ENCODE measurements at regions of chr11 and their contacts with region 1.

Region 1: DNA sequence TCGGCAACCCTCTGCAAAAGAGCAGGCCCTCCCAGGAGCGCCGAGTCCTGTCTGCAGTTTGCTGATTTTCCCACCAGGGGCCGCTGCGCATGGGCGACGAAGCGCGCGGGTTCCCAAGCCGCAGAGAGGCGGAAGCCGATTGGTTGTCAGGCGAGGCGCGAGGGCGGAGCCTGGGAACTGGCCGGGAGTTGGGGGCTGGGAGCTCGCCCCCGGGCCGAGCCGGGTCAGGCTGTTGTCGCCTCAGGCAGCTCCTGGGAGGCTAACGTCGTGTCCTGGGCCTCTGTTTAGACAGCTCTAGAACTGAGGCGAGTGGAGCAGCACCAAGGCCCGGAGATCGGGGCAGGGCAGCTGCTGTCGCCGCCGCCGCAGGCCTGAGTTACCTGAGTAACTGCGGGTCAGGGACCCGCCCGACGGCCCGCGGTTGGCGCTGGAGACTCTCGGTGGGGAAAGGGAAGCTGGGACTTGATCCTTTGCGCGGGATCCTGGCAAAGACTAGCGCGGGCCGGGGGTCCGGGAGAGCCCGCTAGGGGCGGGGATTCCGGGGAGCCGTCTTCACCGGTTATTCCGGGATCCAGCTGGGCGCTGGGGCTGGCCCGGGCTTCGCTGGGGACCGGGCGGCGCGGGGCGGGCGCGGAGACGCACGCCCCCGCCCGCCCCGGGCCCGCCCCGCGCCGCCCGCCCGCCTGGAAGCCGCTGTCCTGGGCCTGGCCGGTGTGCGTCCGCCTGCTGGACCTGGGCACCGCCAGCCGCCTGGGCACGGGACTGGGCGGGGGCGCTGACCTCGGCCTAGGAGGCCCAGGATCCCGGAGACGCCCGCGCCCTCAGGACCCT is at the start of gene STIM1:
- DNase-seq: peak; percentile 98
- H3K4me3 Mint-ChIP-seq: peak within 1 kb of the TSS; percentile 98
- H3K27ac Mint-ChIP-seq: peak within 1 kb of the TSS; percentile 99
- H3K4me1 Mint-ChIP-seq: peaks cover 67% of the 10 kb centered on the region
- H3K27me3 Mint-ChIP-seq: no peaks in the 10 kb centered on the region
- total RNA-seq, gene STIM1: 61.7 and 68.0 TPM in 2 replicates

Region 2: DNA sequence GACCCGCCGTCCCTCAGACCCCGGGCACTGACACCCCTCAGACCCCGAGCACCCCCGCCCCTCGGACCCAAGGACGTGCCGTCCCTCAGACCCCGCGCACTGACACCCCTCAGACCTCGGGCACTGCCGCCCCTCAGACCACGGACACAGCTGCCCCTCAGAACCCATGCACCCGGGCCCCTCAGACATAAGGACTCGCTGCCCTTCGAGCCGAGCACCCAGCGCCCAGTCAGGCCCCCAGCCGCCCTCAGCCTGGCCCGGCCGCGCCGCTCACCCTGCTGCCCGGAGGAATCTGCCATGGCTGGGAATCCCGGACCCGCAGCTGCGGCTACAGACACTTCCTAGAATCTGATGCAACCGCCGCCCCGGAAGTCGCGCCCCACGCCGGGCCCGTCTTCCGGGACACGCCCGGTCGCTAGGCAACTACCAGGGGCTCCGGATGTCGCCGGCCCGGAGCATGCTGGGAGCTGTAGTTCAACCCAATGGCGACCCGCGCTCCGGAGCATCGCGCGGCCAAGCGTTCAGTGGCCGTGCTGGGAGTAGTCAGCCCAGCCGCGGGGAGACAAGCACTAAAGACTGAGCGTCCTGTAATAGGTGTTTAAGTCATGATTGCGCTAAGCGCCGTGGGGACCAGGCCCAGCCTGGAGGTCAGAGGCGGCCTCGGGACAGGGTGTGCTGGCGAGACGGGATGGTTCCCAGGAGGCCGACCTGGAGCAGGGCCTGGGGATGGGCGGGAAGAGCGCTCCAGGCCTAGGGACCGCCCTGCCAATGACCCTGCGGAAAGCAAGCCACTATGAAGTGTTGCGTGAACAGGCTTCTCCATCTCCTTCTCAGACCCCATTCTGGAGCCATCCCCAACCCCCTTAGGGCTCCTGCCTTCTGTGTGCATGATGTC is 797.9 kb before region 1 on chr11 and contains the start of gene CARS1:
- intact Hi-C with region 1: no loop called
- DNase-seq: peak; percentile 93
- H3K4me3 Mint-ChIP-seq: peak within 1 kb of the TSS; percentile 90
- H3K27ac Mint-ChIP-seq: peak within 1 kb of the TSS; percentile 83
- H3K4me1 Mint-ChIP-seq: peaks cover 35% of the 10 kb centered on the region
- H3K27me3 Mint-ChIP-seq: peaks cover 3% of the 10 kb centered on the region
- total RNA-seq, gene CARS1: 60.5 and 63.6 TPM in 2 replicates

Region 3: DNA sequence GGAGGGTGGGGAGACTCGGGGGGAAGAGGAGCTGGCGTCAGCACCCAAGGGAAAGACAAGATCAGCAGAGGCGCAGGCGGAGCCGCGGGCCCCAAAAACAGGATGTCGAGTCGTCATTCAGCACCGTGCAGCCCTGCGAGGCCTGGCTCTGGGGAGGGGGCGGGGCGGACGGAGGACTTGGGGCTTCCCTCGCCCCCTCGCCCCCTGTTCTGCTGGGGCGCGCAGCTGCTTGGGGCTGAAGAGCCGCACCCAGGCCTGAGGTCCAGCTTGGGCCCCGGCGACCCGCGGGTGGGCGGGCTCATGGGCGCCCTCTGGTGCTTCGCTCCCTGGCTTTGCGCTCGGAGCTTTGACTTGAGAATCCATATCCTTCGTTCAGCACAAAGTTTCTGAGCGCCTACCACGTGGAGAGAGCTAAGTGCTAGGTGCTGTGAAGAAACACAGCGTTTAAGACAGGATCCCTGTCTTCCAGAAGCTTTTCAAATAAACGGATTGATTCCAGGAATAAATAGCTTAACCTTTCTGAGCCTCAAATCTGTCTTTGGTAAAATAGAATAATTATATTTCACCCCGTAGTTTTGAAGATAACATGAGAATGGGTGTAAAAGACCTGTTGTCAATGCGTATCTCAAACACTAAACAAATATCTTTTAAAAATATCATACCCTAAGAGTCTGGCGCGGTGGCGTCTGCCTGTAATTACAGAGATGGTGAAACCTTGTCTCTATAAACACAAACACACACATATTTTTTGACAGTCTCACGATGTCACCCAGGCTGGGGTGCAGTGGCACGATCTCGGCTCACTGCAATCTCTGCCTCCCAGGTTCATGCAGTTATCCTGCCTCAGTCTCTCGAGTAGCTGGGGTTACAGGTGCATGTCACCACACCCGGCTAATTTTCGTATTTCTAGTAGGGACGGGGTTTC is 13.5 kb before region 1 on chr11:
- intact Hi-C with region 1: loop called (anchors 1 kb)
- DNase-seq: peak; percentile 89
- H3K4me3 Mint-ChIP-seq: peak overlapping the region; percentile 81
- H3K27ac Mint-ChIP-seq: peak overlapping the region; percentile 97
- H3K4me1 Mint-ChIP-seq: peaks cover 59% of the 10 kb centered on the region
- H3K27me3 Mint-ChIP-seq: no peaks in the 10 kb centered on the region

Region 4: GRCh38 chr11:3879967-3880542 is 24.9 kb after region 1 on chr11:
- intact Hi-C with region 1: loop called (anchors 1 kb)
- DNase-seq: no peak
- H3K4me3 Mint-ChIP-seq: no peak overlapping the region
- H3K27ac Mint-ChIP-seq: peak overlapping the region; percentile 85
- H3K4me1 Mint-ChIP-seq: peaks cover 74% of the 10 kb centered on the region
- H3K27me3 Mint-ChIP-seq: no peaks in the 10 kb centered on the region

Region 5: GRCh38 chr11:3920148-3920852 is 65.1 kb after region 1 on chr11:
- intact Hi-C with region 1: loop called (anchors 1 kb)
- DNase-seq: peak; percentile 59
- H3K4me3 Mint-ChIP-seq: no peak overlapping the region
- H3K27ac Mint-ChIP-seq: peak overlapping the region; percentile 43
- H3K4me1 Mint-ChIP-seq: peaks cover 55% of the 10 kb centered on the region
- H3K27me3 Mint-ChIP-seq: no peaks in the 10 kb centered on the region

Region 6: DNA sequence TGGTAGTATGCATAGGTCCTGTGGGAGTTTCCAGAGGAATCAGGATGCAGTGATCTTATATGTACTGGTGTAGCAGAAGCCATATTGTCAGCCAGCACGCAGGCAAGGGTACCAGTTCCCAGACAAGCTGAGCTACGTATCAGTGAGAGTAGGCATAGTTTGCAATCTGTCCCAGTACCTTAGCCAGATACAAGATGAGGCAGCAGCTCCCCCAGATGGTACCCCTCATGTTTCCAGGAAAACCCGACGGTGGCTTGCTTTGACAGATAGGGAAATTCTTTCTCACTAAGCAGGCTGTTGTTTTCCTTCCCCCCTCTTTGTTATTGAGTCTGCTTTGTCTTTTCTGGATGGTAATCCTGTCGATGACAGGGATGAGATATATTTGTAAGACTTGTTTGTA is 129.7 kb after region 1 on chr11:
- intact Hi-C with region 1: loop called (anchors 1 kb)
- DNase-seq: peak; percentile 8
- H3K4me3 Mint-ChIP-seq: no peak overlapping the region
- H3K27ac Mint-ChIP-seq: peak overlapping the region; percentile 59
- H3K4me1 Mint-ChIP-seq: peaks cover 76% of the 10 kb centered on the region
- H3K27me3 Mint-ChIP-seq: no peaks in the 10 kb centered on the region

Region 7: DNA sequence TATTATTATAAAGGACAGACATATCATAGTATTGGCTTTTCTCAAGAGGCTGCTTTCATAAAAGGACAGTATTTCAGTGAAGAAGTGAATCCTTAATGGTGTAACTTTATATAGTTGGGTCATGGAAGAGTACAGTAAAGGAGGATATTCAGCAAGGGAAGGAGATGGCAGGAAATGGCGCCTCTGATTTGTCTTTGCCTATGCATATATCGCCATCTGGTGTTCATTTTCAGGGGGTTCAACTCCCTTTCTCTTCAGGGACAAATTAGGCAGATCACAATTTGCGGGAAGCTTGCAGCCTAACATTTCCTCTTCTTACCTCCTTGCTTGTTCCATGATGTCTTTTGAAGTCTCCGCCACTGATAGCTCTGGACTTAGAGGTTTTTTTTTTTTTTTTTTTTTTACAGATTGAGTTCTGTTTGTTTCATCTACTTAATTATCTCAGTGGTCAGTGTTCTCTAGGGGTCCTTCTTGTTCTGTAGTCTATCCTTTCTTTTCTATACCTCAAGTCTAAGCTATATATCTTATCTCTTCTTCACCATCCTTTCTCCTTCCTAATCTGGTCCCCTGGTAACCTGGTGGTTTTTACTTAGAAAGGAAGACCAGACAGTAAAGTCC is 217.6 kb after region 1 on chr11:
- intact Hi-C with region 1: loop called (anchors 1 kb)
- DNase-seq: peak; percentile 45
- H3K4me3 Mint-ChIP-seq: no peak overlapping the region
- H3K27ac Mint-ChIP-seq: no peak overlapping the region
- H3K4me1 Mint-ChIP-seq: peaks cover 29% of the 10 kb centered on the region
- H3K27me3 Mint-ChIP-seq: no peaks in the 10 kb centered on the region

Measured in activated T-helper 1 cell treated with anti-CD3 and anti-CD28 coated beads, Interleukin-12 subunit alpha, Interleukin-12 subunit beta, Interleukin-2, Interleukin-4 antibody, amounts not matched to agents 30 ng/mL and 10 ng/mL and 1 ng/mL, durations not matched to agents 14 hours and 24 hours and 36 hours (primary cell).